Ovary (tissue), 10 donors: ENCODE measurements at regions of chr1 and their contacts with region 1.

Region 1: GRCh38 chr1:109790735-109791494 is 27.2 kb upstream of the EPS8L3 start:
- DNase-seq: peak in 2 of 5 donors; percentile 8 to 46
- H3K4me3 ChIP-seq: no peak overlapping the region
- H3K27ac ChIP-seq: no peak overlapping the region
- H3K4me1 ChIP-seq: peaks cover 7% of the 10 kb centered on the region
- H3K27me3 ChIP-seq: no peaks in the 10 kb centered on the region
- CTCF ChIP-seq: no peak
- EP300 ChIP-seq: no peak
- POLR2A ChIP-seq: no peak

Region 2: DNA sequence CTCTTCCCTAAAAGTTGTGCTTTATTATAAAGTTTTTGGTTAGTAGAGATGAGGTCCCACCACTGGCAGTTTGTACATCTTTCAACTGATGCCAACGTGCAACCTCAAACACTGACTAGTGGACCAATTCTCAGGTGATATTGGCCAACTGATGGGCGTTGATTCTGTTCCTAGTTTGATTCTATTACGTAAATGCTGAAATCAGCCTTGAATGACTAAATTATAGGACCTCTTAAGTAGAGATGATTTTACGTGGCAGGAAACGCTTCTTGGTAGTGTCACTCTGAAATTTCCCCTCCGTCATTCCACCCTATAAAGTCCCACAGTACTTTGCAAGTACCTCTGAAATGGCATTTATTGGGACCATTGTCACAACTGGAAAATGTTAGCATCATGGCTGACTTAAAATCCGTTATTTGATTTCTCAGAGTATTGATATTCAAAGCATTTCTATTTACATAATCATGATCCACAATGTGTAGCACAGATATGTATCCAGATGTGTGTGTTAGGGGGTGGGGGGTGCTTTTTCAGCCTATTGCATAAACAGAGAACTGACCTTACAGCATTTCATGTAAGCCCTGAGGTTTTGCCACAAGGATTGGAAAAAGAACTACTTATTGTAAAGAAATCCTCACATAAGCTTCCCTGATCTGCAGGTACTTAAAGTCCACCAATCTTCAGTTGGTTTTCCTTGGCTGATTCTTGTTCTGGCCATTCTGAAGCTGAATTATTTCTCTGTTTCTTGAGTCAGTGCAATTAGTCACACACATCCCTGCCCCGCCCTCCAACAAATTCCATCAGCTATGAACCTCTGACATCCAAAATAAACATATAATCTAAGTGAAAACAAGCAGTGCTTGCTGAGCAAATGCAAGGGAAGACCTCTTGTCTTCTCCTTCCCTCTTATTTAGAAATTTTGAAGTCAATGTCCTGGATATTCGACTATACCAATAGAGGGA is 1086.7 kb before region 1 on chr1:
- intact Hi-C with region 1: no loop called
- DNase-seq: no peak
- H3K4me3 ChIP-seq: no peak overlapping the region
- H3K27ac ChIP-seq: no peak overlapping the region
- H3K4me1 ChIP-seq: no peaks in the 10 kb centered on the region
- H3K27me3 ChIP-seq: no peaks in the 10 kb centered on the region
- CTCF ChIP-seq: no peak
- EP300 ChIP-seq: no peak
- POLR2A ChIP-seq: no peak

Region 3: GRCh38 chr1:109677459-109677858 is 113.5 kb before region 1 on chr1:
- intact Hi-C with region 1: no loop called
- DNase-seq: no peak
- H3K4me3 ChIP-seq: no peak overlapping the region
- H3K27ac ChIP-seq: no peak overlapping the region
- H3K4me1 ChIP-seq: no peaks in the 10 kb centered on the region
- H3K27me3 ChIP-seq: no peaks in the 10 kb centered on the region
- CTCF ChIP-seq: no peak
- EP300 ChIP-seq: no peak
- POLR2A ChIP-seq: no peak

Region 4: GRCh38 chr1:109838838-109839240 is 47.9 kb after region 1 on chr1:
- intact Hi-C with region 1: no loop called
- DNase-seq: no peak
- H3K4me3 ChIP-seq: no peak overlapping the region
- H3K27ac ChIP-seq: no peak overlapping the region
- H3K4me1 ChIP-seq: no peaks in the 10 kb centered on the region
- H3K27me3 ChIP-seq: no peaks in the 10 kb centered on the region
- CTCF ChIP-seq: no peak
- EP300 ChIP-seq: no peak
- POLR2A ChIP-seq: no peak

Region 5: GRCh38 chr1:109910123-109910962 is 119.4 kb after region 1 on chr1 and contains the start of gene CSF1:
- intact Hi-C with region 1: loop called in 1 of 4 experiments (anchors 10 kb)
- DNase-seq: peak; percentile 87 to 94 (median 92)
- H3K4me3 ChIP-seq: peak within 1 kb of the TSS; percentile 87
- H3K27ac ChIP-seq: peak within 1 kb of the TSS; percentile 63 to 68
- H3K4me1 ChIP-seq: peaks cover 11% of the 10 kb centered on the region
- H3K27me3 ChIP-seq: no peaks in the 10 kb centered on the region
- CTCF ChIP-seq: no peak
- EP300 ChIP-seq: no peak
- POLR2A ChIP-seq: peak; percentile 72
- total RNA-seq, gene CSF1: 24.2 to 57.6 (median 44.3) TPM

Region 6: GRCh38 chr1:109923131-109923945 is 132.4 kb after region 1 on chr1:
- intact Hi-C with region 1: loop called in 2 of 4 experiments (anchors 5 to 10 kb)
- DNase-seq: peak in 2 of 5 donors; percentile 26 to 31
- H3K4me3 ChIP-seq: no peak overlapping the region
- H3K27ac ChIP-seq: no peak overlapping the region
- H3K4me1 ChIP-seq: peaks cover 7% of the 10 kb centered on the region
- H3K27me3 ChIP-seq: no peaks in the 10 kb centered on the region
- CTCF ChIP-seq: peak in 1 of 3 donors; percentile 18
- EP300 ChIP-seq: no peak
- POLR2A ChIP-seq: no peak